Panc1 (cell line): ENCODE measurements at regions of chr3 and their contacts with region 1.

Region 1: DNA sequence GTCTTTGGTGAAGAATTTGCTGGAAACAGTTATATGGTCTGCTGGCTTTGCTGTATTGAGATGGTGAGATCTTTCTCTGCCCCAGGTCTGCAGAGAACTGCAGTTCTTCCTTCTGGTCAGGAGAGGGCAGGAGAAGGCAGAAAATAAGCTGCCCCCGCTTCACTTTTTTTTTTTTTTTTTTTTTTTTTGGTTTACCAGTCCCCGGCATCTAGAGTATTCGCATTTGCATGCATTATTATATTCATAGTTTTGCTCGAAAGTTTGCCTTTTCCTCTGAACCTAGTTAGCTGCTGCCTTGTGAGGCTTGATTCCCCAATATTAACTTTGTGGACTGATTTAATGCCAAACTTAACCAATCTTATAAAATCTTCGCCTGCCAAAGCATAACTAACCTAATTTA is 10.6 kb upstream of the PARL start:
- DNase-seq: peak; percentile 42
- ATAC-seq: peak; percentile 76
- H3K4me3 ChIP-seq: no peak overlapping the region
- H3K27ac ChIP-seq: no peak overlapping the region
- H3K4me1 ChIP-seq: no peaks in the 10 kb centered on the region
- H3K27me3 ChIP-seq: no peaks in the 10 kb centered on the region
- CTCF ChIP-seq: peak; percentile 92

Region 2: GRCh38 chr3:183924956-183925355 is 29.7 kb after region 1 on chr3:
- CTCF ChIA-PET with region 1: no interaction called
- POLR2A ChIA-PET with region 1: interaction called, 16 read pairs
- in situ Hi-C with region 1: no loop called
- intact Hi-C with region 1: no loop called
- DNase-seq: peak; percentile 64
- ATAC-seq: peak; percentile 90
- H3K4me3 ChIP-seq: no peak overlapping the region
- H3K27ac ChIP-seq: no peak overlapping the region
- H3K4me1 ChIP-seq: no peaks in the 10 kb centered on the region
- H3K27me3 ChIP-seq: no peaks in the 10 kb centered on the region
- CTCF ChIP-seq: no peak

Region 3: GRCh38 chr3:184017672-184018423 is 122.6 kb after region 1 on chr3 and contains the start of gene ABCC5:
- CTCF ChIA-PET with region 1: interaction called, 11 read pairs
- POLR2A ChIA-PET with region 1: interaction called, 4 read pairs
- in situ Hi-C with region 1: no loop called
- intact Hi-C with region 1: loop called (anchors 1 kb)
- DNase-seq: peak; percentile 65
- ATAC-seq: peak; percentile 99
- H3K4me3 ChIP-seq: peak within 1 kb of the TSS; percentile 73 to 96
- H3K27ac ChIP-seq: peak within 1 kb of the TSS; percentile 92
- H3K4me1 ChIP-seq: peaks cover 19% of the 10 kb centered on the region
- H3K27me3 ChIP-seq: no peaks in the 10 kb centered on the region
- CTCF ChIP-seq: no peak; the same call in 1 of the 2 replicates
- total RNA-seq, gene ABCC5: 35.1 TPM

Region 4: DNA sequence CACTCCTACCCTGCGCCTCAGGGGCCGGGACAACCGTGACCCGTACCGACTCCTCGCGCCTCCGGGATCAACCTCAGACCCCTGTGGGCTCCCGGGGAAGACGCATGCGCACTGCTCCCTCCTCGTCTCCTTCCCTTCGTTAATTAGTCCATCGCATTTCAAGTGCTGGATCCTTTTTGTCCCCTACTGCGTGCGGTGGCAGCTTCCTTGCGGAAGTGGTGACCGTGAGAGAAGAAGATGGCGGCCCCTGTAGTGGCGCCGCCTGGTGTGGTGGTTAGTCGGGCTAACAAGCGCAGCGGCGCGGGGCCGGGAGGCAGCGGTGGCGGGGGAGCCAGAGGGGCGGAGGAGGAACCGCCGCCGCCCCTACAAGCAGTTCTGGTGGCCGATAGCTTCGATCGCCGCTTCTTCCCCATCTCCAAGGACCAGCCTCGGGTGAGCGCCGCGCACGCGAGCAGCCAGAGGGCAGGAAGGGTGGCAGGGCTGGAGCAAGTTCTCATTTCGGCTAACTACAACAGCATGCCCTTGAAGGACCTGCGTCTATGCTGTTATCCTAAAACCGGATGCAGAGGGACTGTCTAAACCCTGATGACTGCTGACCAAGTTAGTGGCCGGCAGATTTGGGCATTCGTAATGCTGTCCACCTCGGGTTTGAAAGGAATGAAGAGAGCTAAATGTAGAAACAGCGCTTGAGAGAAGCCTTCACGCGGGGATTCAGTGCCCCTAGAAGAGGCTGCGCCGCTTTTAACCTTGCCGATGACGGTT is 240.0 kb after region 1 on chr3 and contains the start of gene EIF2B5:
- CTCF ChIA-PET with region 1: no interaction called
- POLR2A ChIA-PET with region 1: interaction called, 4 read pairs
- in situ Hi-C with region 1: no loop called
- intact Hi-C with region 1: loop called (anchors 10 kb)
- DNase-seq: peak; percentile 92
- ATAC-seq: peak; percentile 91
- H3K4me3 ChIP-seq: peak within 1 kb of the TSS; percentile 96 to 100
- H3K27ac ChIP-seq: peak within 1 kb of the TSS; percentile 98
- H3K4me1 ChIP-seq: peaks cover 12% of the 10 kb centered on the region
- H3K27me3 ChIP-seq: no peaks in the 10 kb centered on the region
- CTCF ChIP-seq: peak; percentile 54; the same call in 1 of the 2 replicates
- total RNA-seq, gene EIF2B5: 60.2 TPM